ENCODE measurements at regions of chr1 and their contacts with region 1.

Region 1: GRCh38 chr1:8374812-8375211 is 56.9 kb downstream of the SLC45A1 start:
- DNase-seq: no peak
- ATAC-seq: no peak
- H3K4me3 ChIP-seq: no peak overlapping the region
- H3K27ac ChIP-seq: peak overlapping the region; percentile 46 to 89
- H3K4me1 ChIP-seq: peaks cover 6 to 7% of the 10 kb centered on the region in 2 donors
- H3K27me3 ChIP-seq: no peaks in the 10 kb centered on the region

Region 2: DNA sequence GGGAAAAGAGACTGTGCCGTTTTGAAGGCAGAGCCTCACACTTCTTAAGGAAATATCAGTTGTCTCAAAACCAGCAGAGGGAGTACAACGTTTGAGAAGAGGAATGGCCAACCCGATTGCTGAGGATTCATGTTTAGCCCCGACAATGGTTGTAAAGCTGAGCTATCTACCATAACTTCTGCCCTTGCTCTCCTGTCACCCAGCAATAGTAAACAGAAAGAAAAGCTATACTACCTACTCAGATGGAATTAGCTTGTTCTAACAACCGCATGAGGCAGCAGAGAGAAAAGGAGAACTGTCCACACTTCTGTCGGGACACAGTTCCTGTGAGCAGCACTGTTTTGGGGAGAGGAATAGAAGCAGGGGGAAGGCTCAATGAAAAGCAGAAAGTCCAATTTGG is 34.3 kb after region 1 on chr1:
- intact Hi-C with region 1: loop called (anchors 5 kb)
- DNase-seq: no peak
- ATAC-seq: peak; percentile 63
- H3K4me3 ChIP-seq: no peak overlapping the region
- H3K27ac ChIP-seq: peak overlapping the region in 1 of 2 donors; percentile 15
- H3K4me1 ChIP-seq: peaks cover 7 to 32% of the 10 kb centered on the region in 2 donors
- H3K27me3 ChIP-seq: no peaks in the 10 kb centered on the region

Region 3: GRCh38 chr1:8525558-8526275 is 150.9 kb after region 1 on chr1:
- intact Hi-C with region 1: loop called in 1 of 2 experiments (anchors 10 kb)
- DNase-seq: peak; percentile 81 to 86
- ATAC-seq: peak; percentile 95
- H3K4me3 ChIP-seq: peak overlapping the region; percentile 65 to 87
- H3K27ac ChIP-seq: peak overlapping the region; percentile 36 to 91
- H3K4me1 ChIP-seq: peaks cover 0 to 2% of the 10 kb centered on the region in 2 donors
- H3K27me3 ChIP-seq: no peaks in the 10 kb centered on the region